Activated naive CD4-positive, alpha-beta T cell treated with anti-CD3 and anti-CD28 coated beads, Interleukin-2, amount 10 ng/mL, durations not matched to agents 7 days and 5 days (primary cell): ENCODE measurements at regions of chr12 and their contacts with region 1.

Region 1: DNA sequence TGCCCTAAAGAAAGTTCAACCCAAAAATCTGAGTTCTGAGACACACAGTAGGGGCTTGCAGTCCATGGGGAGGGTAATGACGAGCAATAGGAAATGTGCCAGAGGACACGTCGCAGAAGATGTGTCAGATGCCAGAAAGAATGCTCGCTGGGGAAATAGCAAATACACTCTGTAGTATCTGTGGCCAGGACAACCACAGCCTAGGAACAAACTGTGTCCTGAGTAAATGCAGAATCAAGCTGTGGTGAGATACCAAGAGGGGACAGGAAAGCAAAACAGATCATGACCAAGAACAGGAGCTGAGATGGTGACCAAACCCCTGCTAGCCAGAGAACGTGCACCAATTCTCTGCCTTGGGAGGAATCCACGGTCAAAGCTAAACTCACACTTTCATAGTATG is 9.1 kb downstream of the CRACR2A start:
- DNase-seq: no peak
- H3K4me3 Mint-ChIP-seq: no peak overlapping the region
- H3K27ac Mint-ChIP-seq: no peak overlapping the region
- H3K4me1 Mint-ChIP-seq: peaks cover 42% of the 10 kb centered on the region
- H3K27me3 Mint-ChIP-seq: no peaks in the 10 kb centered on the region

Region 2: DNA sequence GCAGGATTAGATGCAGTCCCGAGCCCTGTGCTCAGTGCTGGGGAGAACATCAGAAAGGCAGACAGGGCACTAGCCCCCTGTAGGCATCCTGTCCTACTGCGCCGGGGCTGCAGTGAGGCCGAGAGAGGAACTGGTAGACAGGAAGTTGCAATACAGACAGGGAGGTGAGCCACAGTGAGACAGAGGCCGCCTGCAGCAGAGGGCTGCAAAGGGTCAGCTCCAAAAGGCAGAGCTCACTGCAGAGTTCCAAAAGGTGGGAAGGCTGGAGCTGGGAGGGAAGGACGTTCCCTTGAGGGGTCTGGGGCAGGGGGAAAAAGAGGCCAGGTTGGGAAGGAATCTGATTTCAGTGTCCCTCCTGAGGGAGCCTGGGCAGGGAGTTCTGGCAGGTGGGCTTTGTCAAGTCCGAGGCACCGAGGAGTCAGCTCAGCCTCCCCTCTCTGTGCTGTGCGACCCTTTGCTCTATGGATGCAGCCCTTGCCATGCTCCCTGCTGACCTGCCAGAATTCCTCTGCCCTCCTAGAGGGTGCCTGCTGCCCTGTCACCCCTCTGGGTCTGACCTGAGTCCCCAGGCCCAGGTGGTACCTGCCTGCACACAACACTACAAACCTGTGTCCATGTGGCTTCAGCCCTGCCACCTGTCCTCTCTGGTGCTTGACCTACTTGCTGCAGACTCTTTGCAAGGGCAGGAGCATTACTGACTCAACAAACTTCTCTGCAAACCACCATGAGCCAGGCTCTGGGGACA is 189.3 kb before region 1 on chr12:
- CTCF ChIA-PET with region 1: no interaction called
- DNase-seq: no peak
- H3K4me3 Mint-ChIP-seq: no peak overlapping the region
- H3K27ac Mint-ChIP-seq: no peak overlapping the region
- H3K4me1 Mint-ChIP-seq: no peaks in the 10 kb centered on the region
- H3K27me3 Mint-ChIP-seq: peaks cover 30% of the 10 kb centered on the region

Region 3: GRCh38 chr12:3717283-3717898 is 26.4 kb before region 1 on chr12:
- CTCF ChIA-PET with region 1: no interaction called
- DNase-seq: no peak
- H3K4me3 Mint-ChIP-seq: no peak overlapping the region
- H3K27ac Mint-ChIP-seq: no peak overlapping the region
- H3K4me1 Mint-ChIP-seq: peaks cover 14% of the 10 kb centered on the region
- H3K27me3 Mint-ChIP-seq: no peaks in the 10 kb centered on the region

Region 4: GRCh38 chr12:3727877-3728632 is 15.7 kb before region 1 on chr12:
- CTCF ChIA-PET with region 1: interaction called, 18 read pairs
- DNase-seq: peak; percentile 57
- H3K4me3 Mint-ChIP-seq: peak overlapping the region; percentile 25
- H3K27ac Mint-ChIP-seq: peak overlapping the region; percentile 82
- H3K4me1 Mint-ChIP-seq: peaks cover 39% of the 10 kb centered on the region
- H3K27me3 Mint-ChIP-seq: no peaks in the 10 kb centered on the region